A549 (cell line): ENCODE measurements at regions of chr1 and their contacts with region 1.

Region 1: GRCh38 chr1:148307583-148308190 is 155.6 kb upstream of the NBPF11 start:
- DNase-seq: no peak
- ATAC-seq: no peak
- H3K4me3 ChIP-seq: no peak overlapping the region
- H3K27ac ChIP-seq: no peak overlapping the region
- H3K4me1 ChIP-seq: peaks cover 12% of the 10 kb centered on the region; the same call in 2 of the 3 replicates
- CTCF ChIP-seq: no peak
- EP300 ChIP-seq: no peak
- POLR2A ChIP-seq: no peak
- RAD21 ChIP-seq: no peak

Region 2: GRCh38 chr1:148263128-148263905 is 44.4 kb before region 1 on chr1:
- CTCF ChIA-PET with region 1: no interaction called
- POLR2A ChIA-PET with region 1: interaction called, 14 read pairs
- DNase-seq: peak; percentile 65 to 92
- ATAC-seq: peak; percentile 72
- H3K4me3 ChIP-seq: peak overlapping the region; percentile 52
- H3K27ac ChIP-seq: peak overlapping the region; percentile 80 to 90
- H3K4me1 ChIP-seq: 0 out of 3 replicates have a peak, but pooled peaks cover 3% of the 10 kb centered on the region
- CTCF ChIP-seq: no peak
- EP300 ChIP-seq: no peak
- POLR2A ChIP-seq: peak; percentile 96
- RAD21 ChIP-seq: 0 out of 5 replicates have a peak, but pooled peaks of 1 of the 2 experiments have one; percentile 2